ENCODE measurements at regions of chr19 and their contacts with region 1.

Region 1: DNA sequence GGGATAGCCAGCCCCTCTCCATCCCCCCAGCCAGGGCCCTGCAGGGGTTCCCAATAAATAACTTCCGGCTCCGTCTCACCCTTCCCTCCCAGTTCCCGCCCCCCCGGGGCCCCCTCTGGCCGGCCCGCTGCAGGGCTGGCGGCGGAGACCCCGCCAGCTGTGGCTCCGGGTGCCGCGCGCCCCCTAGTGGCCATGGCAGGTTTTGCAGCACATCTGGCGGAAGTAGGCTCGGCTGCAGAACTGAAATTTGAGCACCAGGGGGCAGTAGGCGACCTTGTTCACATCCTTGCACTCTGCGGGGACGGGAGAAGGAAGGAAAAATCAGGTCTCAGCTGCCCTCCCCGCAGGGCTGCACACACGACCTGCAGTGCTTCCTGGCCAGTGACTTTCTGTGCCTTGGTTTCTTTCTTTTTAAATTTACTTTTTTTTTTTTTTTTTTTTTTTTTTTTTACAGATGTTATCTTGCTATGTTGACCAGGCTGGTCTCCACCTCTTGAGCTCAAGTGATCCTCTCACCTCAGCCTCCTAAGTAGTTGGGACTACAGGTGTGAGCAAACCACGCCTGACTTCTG is 3.6 kb upstream of the MYO1F start:
- DNase-seq: peak; percentile 88
- ATAC-seq: peak; percentile 76
- H3K4me3 Mint-ChIP-seq: no peak overlapping the region
- H3K27ac Mint-ChIP-seq: no peak overlapping the region
- H3K4me1 Mint-ChIP-seq: peaks cover 20% of the 10 kb centered on the region
- H3K27me3 Mint-ChIP-seq: peaks cover 6% of the 10 kb centered on the region
- CTCF ChIP-seq: peak; percentile 99

Region 2: GRCh38 chr19:8355631-8356402 is 225.0 kb before region 1 on chr19:
- CTCF ChIA-PET with region 1: interaction called, 17 read pairs
- POLR2A ChIA-PET with region 1: no interaction called
- DNase-seq: no peak
- ATAC-seq: no peak
- H3K4me3 Mint-ChIP-seq: no peak overlapping the region
- H3K27ac Mint-ChIP-seq: no peak overlapping the region
- H3K4me1 Mint-ChIP-seq: peaks cover 14% of the 10 kb centered on the region
- H3K27me3 Mint-ChIP-seq: peaks cover 16% of the 10 kb centered on the region
- CTCF ChIP-seq: no peak

Region 3: DNA sequence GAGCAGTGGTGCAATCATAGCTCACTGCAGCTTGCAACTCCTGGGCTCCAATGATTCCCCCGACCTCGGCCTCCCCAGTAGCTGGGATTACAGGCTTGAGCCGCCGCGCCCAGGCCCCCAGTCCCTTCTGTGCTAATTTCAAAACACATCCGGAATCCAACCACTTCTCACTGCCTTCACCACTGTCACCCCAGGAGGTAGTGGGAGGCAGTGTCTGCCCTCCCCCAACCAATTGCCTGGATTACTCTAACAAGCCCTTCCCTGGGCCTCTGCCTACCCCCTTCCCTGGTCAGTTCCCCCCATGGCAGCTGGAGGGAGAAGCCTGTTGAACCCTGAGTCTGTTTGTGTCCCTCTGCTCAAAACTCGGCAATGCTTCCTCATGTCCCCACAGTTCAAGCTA is 80.6 kb before region 1 on chr19:
- CTCF ChIA-PET with region 1: interaction called, 18 read pairs
- POLR2A ChIA-PET with region 1: interaction called, 4 read pairs
- DNase-seq: no peak
- ATAC-seq: no peak; the same call in 1 of the 2 replicates
- H3K4me3 Mint-ChIP-seq: no peak overlapping the region
- H3K27ac Mint-ChIP-seq: no peak overlapping the region
- H3K4me1 Mint-ChIP-seq: peaks cover 7% of the 10 kb centered on the region
- H3K27me3 Mint-ChIP-seq: no peaks in the 10 kb centered on the region
- CTCF ChIP-seq: no peak

Region 4: DNA sequence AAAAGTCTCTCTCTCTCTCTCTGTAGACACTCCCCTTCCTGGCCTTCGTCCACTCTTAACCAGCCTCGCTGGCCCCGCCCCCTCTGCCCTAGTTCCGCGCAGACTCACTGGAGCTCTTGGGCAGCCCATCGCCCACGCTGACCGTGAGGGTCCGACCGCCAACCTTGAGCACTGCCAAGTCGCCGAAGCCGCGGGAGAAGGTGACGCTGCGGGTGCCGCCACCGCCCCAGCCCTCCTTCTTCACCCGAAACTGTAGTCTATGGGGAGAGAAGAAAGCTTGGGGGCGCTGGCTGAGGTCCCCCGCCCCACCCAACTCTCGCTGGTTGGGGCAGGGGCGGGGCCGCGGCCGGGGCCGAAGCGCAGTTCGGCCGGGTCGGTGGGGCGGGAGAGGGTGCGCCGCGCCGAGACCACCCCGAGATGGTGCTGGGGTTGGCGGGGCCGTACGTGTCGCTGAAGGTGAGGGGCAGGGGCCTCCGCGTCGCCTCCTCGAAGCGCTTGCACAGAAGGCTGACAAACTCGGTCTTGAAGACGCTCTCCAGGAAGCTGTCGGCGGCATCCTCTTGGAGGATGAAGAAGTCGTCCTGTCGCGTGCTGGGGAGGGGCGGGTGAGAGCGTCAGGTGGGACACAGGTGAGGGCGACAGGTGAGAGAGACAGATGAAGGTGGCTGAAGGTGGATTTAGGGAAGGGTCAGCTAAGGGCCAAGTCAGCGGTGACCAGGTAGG is 54.3 kb before region 1 on chr19:
- CTCF ChIA-PET with region 1: interaction called, 88 read pairs
- POLR2A ChIA-PET with region 1: interaction called, 3 read pairs
- DNase-seq: peak; percentile 95
- ATAC-seq: peak; percentile 48
- H3K4me3 Mint-ChIP-seq: no peak overlapping the region
- H3K27ac Mint-ChIP-seq: no peak overlapping the region
- H3K4me1 Mint-ChIP-seq: peaks cover 19% of the 10 kb centered on the region
- H3K27me3 Mint-ChIP-seq: peaks cover 6% of the 10 kb centered on the region
- CTCF ChIP-seq: no peak

Region 5: DNA sequence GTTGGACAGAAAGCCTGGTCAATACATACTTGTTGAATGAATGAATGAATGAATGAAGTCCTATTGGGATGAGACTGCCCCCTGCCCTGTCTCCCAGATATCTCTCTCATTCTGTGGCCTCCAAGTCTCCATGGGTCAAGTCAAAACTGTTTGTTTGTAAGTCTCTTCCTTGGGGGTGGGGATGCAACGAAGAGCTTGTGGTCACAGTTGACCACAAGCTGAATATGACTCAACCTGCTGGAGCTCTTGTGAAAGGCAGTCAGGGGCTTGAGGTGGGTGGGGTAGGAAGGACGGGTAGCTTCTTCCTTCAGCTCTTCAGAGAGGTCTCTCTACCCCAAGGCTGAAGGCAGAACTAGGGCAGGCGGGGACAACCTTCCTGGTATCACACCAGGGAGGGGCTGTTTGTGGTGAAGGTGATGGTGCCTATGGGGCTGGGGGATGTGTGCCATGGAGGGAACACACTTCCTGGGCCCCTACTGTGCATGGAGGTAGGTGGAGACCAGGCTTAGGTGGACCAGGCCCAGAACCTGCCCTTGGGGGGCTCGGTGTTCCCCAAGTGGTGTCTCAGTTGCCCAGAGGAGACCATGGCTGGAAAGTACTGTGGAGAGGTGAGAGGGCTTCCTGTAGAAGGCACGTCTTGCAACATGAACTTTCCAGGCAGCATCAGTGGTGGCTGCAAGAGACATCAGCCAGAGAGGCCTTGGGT is 11.6 kb before region 1 on chr19:
- CTCF ChIA-PET with region 1: interaction called, 29 read pairs
- POLR2A ChIA-PET with region 1: no interaction called
- DNase-seq: no peak
- ATAC-seq: no peak
- H3K4me3 Mint-ChIP-seq: no peak overlapping the region
- H3K27ac Mint-ChIP-seq: no peak overlapping the region
- H3K4me1 Mint-ChIP-seq: no peaks in the 10 kb centered on the region
- H3K27me3 Mint-ChIP-seq: 0 out of 2 replicates have a peak, but pooled peaks cover 3% of the 10 kb centered on the region
- CTCF ChIP-seq: no peak

Region 6: GRCh38 chr19:8615813-8616596 is 35.2 kb after region 1 on chr19:
- CTCF ChIA-PET with region 1: interaction called, 19 read pairs
- POLR2A ChIA-PET with region 1: no interaction called
- DNase-seq: peak; percentile 77
- ATAC-seq: peak; percentile 12; the same call in 1 of the 2 replicates
- H3K4me3 Mint-ChIP-seq: no peak overlapping the region
- H3K27ac Mint-ChIP-seq: no peak overlapping the region
- H3K4me1 Mint-ChIP-seq: peaks cover 14% of the 10 kb centered on the region
- H3K27me3 Mint-ChIP-seq: no peaks in the 10 kb centered on the region
- CTCF ChIP-seq: peak; percentile 96

Region 7: DNA sequence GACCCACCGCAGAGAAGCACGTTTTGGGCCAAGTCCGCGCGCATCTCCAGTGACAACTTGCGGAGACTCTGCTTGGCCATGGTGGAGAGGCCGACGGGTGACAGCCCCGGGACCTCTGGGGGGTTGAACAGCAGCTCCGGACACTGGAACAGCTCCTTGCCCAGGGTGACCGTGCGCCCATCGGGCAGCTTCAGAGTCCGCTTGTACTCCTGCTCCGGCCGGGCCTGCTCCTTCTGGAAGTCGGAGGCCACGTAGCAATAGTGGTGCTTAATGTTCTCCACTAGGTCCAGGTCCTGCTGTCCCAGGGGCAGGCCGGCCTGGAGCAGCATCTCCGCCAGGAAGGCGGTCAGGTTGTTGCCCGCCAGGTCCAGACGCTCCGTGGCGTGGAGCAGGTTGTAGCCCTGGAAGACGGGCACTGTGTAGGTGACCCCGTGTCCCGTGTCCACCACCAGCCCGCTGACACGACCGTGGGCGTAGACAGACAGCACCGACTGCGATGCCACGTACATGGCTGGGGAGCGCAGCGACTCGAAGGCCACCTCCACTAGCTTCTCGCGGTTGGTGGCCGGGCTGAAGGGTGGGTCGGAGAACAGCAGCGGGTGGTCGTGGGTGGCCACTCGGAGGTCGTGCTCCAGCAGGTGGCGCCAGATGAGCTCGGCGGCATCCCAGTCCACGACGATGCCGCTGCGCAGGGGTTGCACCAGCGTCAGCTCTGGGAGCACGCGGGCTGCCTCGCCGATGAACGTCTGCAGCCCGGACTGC is 117.1 kb after region 1 on chr19:
- CTCF ChIA-PET with region 1: interaction called, 29 read pairs
- POLR2A ChIA-PET with region 1: no interaction called
- DNase-seq: peak; percentile 68
- ATAC-seq: peak; percentile 69
- H3K4me3 Mint-ChIP-seq: no peak overlapping the region
- H3K27ac Mint-ChIP-seq: no peak overlapping the region
- H3K4me1 Mint-ChIP-seq: no peaks in the 10 kb centered on the region
- H3K27me3 Mint-ChIP-seq: peaks cover 15% of the 10 kb centered on the region
- CTCF ChIP-seq: no peak

Measured in WTC11 (cell line).